ENCODE measurements at regions of chr10 and their contacts with region 1.

Region 1: DNA sequence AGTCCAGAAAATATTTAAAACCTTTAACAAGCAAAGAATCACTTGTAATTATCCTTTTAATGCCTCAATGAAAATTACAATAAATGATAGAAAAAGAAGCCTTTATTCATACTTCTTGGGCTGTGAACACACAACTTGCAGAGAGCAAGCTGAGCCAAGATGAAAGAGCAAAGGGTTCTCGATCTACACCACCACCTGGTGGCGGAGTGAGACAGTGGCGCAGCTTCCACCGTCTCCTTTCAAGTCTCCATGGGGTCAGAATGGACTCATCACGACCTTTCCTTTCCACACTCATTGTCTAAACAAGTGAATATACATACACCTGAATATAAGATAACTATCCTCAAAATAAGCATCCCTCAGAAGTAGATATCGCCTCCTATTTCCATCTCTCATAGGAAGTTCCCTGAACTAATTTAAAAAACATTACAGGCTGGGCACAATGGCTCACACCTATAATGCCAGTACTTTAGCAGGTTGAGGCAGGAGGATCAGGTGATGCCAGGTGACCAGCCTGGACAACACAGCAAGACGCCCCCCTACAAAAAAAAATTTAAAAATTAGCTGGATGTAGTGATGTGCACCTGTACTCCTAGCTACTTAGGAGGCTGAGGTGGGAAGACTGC is 40.7 kb downstream of the ATE1 start:
- DNase-seq: no peak
- H3K4me3 ChIP-seq: no peak overlapping the region
- H3K27me3 ChIP-seq: no peaks in the 10 kb centered on the region
- CTCF ChIP-seq: peak; percentile 87

Region 2: GRCh38 chr10:120942806-120943413 is 944.2 kb before region 1 on chr10:
- CTCF ChIA-PET with region 1: interaction called, 20 read pairs
- POLR2A ChIA-PET with region 1: no interaction called
- DNase-seq: peak; percentile 3
- H3K4me3 ChIP-seq: no peak overlapping the region
- H3K27me3 ChIP-seq: no peaks in the 10 kb centered on the region
- CTCF ChIP-seq: peak; percentile 93

Region 3: DNA sequence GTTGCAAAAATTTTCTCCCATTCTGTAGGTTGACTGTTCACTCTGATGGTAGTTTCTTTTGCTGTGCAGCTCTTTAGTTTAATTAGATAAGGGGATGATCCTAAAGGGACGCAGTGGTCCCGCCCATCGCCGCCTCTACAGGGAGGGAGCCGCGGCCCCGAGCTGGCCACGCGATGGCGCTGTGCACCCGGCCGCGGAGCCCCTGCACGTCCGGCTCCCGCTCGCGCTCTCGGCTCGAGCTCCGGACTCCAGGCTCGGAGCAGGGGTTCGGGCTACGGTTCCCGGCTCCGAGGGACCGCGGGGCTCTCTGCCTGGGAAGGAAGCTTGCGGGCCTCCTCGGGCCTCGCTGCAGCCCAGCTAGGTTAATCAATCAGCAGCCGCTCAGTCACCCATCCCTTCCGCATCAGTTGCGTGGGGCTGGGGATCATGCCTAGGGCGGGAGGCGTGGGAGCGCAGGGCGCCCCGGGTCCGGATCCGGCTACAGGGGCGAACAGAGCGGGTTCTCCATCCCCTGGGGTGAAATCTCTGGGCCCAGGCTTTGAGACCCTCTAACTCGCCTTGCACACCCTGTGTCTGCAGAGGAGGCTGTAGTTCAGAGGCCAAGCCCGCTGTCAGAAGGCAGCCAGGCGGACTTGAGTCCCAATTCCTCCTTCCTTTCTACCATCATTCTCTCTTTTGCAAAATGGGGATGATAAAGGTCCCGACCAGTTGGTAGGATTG is 938.1 kb before region 1 on chr10:
- CTCF ChIA-PET with region 1: interaction called, 15 read pairs
- POLR2A ChIA-PET with region 1: no interaction called
- DNase-seq: no peak
- H3K4me3 ChIP-seq: peak overlapping the region; percentile 40
- H3K27me3 ChIP-seq: peaks cover 11% of the 10 kb centered on the region
- CTCF ChIP-seq: peak; percentile 60

Region 4: GRCh38 chr10:121921238-121921931 is 34.3 kb after region 1 on chr10:
- CTCF ChIA-PET with region 1: no interaction called
- POLR2A ChIA-PET with region 1: no interaction called
- DNase-seq: no peak
- H3K4me3 ChIP-seq: no peak overlapping the region
- H3K27me3 ChIP-seq: no peaks in the 10 kb centered on the region
- CTCF ChIP-seq: no peak

Region 5: DNA sequence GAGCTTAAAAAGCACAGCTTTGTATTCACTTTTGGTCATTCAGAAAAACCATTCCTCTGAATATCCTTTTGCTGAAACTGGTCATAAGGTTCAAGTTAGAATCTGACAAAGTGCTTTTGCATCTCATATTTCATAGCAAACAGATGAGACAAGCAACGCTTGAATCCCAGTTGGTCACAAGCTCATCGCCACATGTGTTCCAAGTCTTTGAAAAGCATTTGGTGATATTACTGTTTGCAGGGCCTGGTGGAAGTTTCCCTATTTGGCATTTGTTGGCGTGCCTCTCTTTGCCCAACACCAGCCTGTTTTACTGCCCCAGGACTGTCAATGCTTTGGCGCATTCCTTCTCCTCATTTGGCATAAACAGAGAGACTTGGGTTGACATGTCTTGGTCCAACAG is 112.2 kb after region 1 on chr10:
- CTCF ChIA-PET with region 1: no interaction called
- POLR2A ChIA-PET with region 1: no interaction called
- DNase-seq: peak; percentile 4
- H3K4me3 ChIP-seq: no peak overlapping the region
- H3K27me3 ChIP-seq: no peaks in the 10 kb centered on the region
- CTCF ChIP-seq: no peak